ENCODE measurements at regions of chr7 and their contacts with region 1.

Region 1: DNA sequence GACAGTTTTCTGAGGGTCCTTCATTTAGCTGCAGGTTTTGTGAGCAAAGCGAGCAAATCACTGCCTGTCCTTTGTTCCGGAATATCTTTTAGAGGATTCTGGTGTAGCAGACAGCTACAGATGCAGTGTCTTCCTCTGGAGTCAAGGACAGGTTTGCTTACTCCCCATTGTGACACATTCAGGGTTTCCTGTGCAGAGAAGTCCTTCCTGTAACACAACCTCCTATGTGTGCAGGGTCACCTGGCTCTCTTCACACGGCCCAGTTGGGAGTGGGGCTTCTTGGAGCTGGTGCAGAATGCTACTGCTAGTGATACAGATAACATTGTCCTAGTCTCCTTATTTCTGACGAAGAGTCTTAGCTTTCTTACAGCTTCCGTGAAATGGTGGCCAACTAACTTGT is 47.9 kb downstream of the RBM33 start:
- DNase-seq: peak; percentile 39
- H3K4me3 ChIP-seq: no peak overlapping the region
- H3K27ac ChIP-seq: no peak overlapping the region
- H3K4me1 ChIP-seq: peaks cover 10% of the 10 kb centered on the region
- H3K27me3 ChIP-seq: no peaks in the 10 kb centered on the region
- CTCF ChIP-seq: no peak
- POLR2A ChIP-seq: no peak

Region 2: GRCh38 chr7:155676052-155676451 is 16.3 kb before region 1 on chr7:
- CTCF ChIA-PET with region 1: no interaction called
- POLR2A ChIA-PET with region 1: interaction called, 6 read pairs
- dilution Hi-C with region 1: no loop called
- intact Hi-C with region 1: loop called (anchors 2 kb)
- DNase-seq: no peak
- H3K4me3 ChIP-seq: no peak overlapping the region
- H3K27ac ChIP-seq: no peak overlapping the region
- H3K4me1 ChIP-seq: peaks cover 4% of the 10 kb centered on the region
- H3K27me3 ChIP-seq: no peaks in the 10 kb centered on the region
- CTCF ChIP-seq: no peak
- POLR2A ChIP-seq: no peak

Region 3: GRCh38 chr7:155702616-155703015 is 10.3 kb after region 1 on chr7:
- CTCF ChIA-PET with region 1: interaction called, 14 read pairs
- POLR2A ChIA-PET with region 1: no interaction called
- dilution Hi-C with region 1: no loop called
- intact Hi-C with region 1: no loop called
- DNase-seq: peak; percentile 36
- H3K4me3 ChIP-seq: no peak overlapping the region
- H3K27ac ChIP-seq: no peak overlapping the region
- H3K4me1 ChIP-seq: peaks cover 7% of the 10 kb centered on the region
- H3K27me3 ChIP-seq: no peaks in the 10 kb centered on the region
- CTCF ChIP-seq: no peak
- POLR2A ChIP-seq: no peak

Measured in endothelial cell of umbilical vein (primary cell).